ENCODE measurements at regions of chr1 and their contacts with region 1.

Region 1: DNA sequence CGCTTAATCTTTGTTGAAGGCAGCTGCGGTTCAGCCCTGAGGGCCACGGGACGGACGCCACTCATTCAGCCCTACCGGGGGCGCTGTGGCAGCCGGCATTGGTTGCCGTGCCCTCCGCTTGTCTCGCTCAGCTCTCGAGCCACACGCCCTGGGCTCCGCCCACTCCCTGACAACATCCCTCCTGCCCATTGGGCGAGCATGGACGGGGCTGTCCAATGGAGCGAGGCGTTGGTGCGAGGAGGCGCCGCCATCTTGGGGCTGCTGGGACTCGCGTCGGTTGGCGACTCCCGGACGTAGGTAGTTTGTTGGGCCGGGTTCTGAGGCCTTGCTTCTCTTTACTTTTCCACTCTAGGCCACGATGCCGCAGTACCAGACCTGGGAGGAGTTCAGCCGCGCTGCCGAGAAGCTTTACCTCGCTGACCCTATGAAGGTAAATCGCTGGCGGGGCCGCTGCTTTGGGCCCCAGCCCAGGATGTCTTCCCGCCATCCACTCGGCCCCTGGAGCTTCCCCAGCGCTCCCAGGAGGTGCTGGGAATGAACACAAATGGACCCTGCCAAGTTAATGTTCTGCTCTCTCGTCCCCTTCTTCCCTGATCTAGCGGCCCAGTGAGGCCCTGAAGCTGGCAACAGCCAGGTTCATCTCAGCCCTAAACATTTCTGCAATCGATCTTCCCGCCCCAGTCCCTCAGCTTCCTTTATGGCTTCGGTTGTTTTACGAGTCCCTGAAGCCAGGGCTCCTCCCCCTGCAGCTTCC is at the start of gene SRP9:
- DNase-seq: peak; percentile 100
- ATAC-seq: peak; percentile 99
- H3K4me3 Mint-ChIP-seq: no peak within 1 kb of the TSS
- H3K27ac Mint-ChIP-seq: no peak within 1 kb of the TSS
- H3K4me1 Mint-ChIP-seq: peaks cover 29% of the 10 kb centered on the region
- H3K27me3 Mint-ChIP-seq: no peaks in the 10 kb centered on the region
- total RNA-seq, gene SRP9: 198 to 225 TPM

Region 2: GRCh38 chr1:225612287-225612686 is 165.5 kb before region 1 on chr1:
- CTCF ChIA-PET with region 1: no interaction called
- DNase-seq: no peak
- ATAC-seq: no peak
- H3K4me3 Mint-ChIP-seq: no peak overlapping the region
- H3K27ac Mint-ChIP-seq: no peak overlapping the region
- H3K4me1 Mint-ChIP-seq: no peaks in the 10 kb centered on the region
- H3K27me3 Mint-ChIP-seq: peaks cover 4% of the 10 kb centered on the region

Region 3: GRCh38 chr1:225766967-225767633 is 10.7 kb before region 1 on chr1:
- CTCF ChIA-PET with region 1: interaction called, 16 read pairs
- DNase-seq: no peak
- ATAC-seq: no peak
- H3K4me3 Mint-ChIP-seq: no peak overlapping the region
- H3K27ac Mint-ChIP-seq: no peak overlapping the region
- H3K4me1 Mint-ChIP-seq: no peaks in the 10 kb centered on the region
- H3K27me3 Mint-ChIP-seq: peaks cover 13% of the 10 kb centered on the region

Region 4: DNA sequence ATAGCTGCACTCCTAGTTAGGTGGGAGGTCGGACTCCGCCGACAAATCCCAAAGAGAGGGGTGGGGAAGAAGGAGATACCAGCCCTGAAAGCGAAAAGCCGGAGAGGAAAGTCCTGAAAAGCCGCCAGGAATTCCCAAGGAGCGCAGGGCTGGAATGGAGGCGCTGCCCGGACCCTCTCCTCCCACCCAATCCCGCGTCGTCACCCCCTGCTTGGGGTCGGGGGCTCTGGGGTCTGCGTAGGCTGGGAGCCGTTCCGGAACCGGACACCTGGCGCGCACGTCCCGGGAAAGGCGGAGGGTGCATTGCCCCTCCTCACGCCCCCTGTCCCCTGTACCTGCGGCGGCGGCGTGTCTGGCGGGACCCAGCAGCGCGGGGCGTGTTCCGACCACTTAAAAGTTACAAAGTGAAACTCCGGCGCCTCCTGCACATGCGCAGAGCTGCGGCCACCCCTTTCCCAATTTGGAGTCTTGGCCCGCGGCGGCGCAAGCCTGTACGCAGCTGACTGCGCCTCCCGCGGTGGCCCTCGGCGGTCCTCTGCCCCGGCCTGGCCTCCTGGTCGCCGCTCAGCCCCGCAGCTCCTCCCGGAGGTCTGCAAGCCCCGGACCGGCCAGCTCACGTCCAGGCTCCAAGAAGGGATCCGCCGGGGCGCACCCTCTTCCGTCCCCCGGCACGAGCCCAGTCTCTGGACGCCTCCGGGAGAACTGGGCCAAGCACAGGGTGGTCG is 104.4 kb after region 1 on chr1 and contains the start of gene TMEM63A:
- CTCF ChIA-PET with region 1: interaction called, 30 read pairs
- DNase-seq: peak; percentile 92
- ATAC-seq: peak; percentile 87
- H3K4me3 Mint-ChIP-seq: peak within 1 kb of the TSS; percentile 82
- H3K27ac Mint-ChIP-seq: peak within 1 kb of the TSS; percentile 87
- H3K4me1 Mint-ChIP-seq: peaks cover 35% of the 10 kb centered on the region
- H3K27me3 Mint-ChIP-seq: peaks cover 5% of the 10 kb centered on the region
- total RNA-seq, gene TMEM63A: 50.4 to 58.7 TPM

Region 5: GRCh38 chr1:225923692-225924555 is 146.2 kb after region 1 on chr1 and contains the start of gene PYCR2:
- CTCF ChIA-PET with region 1: interaction called, 18 read pairs
- DNase-seq: peak; percentile 96
- ATAC-seq: peak; percentile 99
- H3K4me3 Mint-ChIP-seq: peak within 1 kb of the TSS; percentile 96
- H3K27ac Mint-ChIP-seq: peak within 1 kb of the TSS; percentile 93
- H3K4me1 Mint-ChIP-seq: peaks cover 44% of the 10 kb centered on the region
- H3K27me3 Mint-ChIP-seq: no peaks in the 10 kb centered on the region
- total RNA-seq, gene PYCR2: 103 to 106 TPM

Measured in activated CD8-positive, alpha-beta memory T cell treated with anti-CD3 and anti-CD28 coated beads, Interleukin-2, amount 10 ng/mL, durations not matched to agents 7 days and 5 days (primary cell).